Caco-2 (cell line): ENCODE measurements at regions of chr1 and their contacts with region 1.

Region 1: DNA sequence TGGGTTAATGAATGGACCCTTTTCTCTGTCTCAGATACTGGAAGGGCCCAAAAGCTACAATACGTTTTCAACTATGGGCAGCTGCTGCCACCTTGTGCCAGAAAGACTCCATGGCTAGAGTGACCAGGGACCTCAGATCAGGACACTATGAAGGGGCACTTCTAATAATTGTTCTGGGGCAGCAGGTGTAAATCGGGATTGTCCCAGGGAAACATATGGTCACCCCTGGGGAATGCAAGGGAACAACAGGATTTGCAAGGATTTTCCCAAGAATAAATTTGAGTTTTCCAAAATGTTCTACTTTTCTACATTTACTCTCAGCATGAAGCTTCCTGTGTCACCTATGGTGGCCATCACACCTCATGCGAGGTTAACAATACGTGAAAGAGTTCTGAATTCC is 12.0 kb upstream of the FCAMR start:
- DNase-seq: peak; percentile 69 to 71
- H3K4me3 ChIP-seq: no peak overlapping the region
- H3K4me3 Mint-ChIP-seq: no peak overlapping the region
- H3K27ac Mint-ChIP-seq: no peak overlapping the region
- H3K4me1 ChIP-seq: peaks cover 18% of the 10 kb centered on the region
- H3K4me1 Mint-ChIP-seq: peaks cover 22% of the 10 kb centered on the region
- H3K27me3 ChIP-seq: no peaks in the 10 kb centered on the region
- H3K27me3 Mint-ChIP-seq: no peaks in the 10 kb centered on the region
- CTCF ChIP-seq: peak; percentile 76 to 89

Region 2: DNA sequence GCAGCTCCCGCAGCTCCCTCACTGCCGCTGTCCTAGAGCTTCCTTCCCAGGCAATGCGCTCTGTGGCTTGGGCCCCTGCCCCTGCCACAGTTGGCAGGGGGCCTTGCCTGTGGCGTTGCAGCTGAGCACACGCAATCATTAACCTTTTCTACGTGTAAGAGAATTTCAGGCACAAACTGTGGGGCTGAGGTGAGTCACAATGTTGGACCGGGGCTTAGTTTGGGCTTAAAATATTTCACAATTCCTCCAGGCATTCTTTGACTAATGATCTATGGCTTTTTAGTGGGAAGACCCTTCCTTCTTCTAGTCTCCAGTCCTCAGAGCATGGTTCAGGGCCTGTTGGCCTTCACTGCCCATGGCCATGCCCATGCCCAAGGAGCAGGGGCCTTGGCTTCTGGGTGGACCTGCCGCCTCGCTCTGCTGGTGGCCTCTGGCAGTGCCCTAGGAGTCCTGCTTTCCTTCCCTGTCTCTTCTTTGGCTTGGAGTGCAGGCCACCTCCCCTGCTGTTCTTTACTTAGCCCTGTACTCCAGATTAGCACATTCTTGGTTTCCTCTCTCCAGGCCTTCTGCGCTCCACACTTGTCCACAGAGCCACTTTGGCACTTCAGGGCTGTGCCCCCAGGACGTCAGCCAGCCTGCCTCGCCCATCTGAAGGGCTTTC is 258.3 kb before region 1 on chr1:
- CTCF ChIA-PET with region 1: no interaction called
- POLR2A ChIA-PET with region 1: no interaction called
- intact Hi-C with region 1: loop called (anchors 2 kb)
- DNase-seq: peak in 1 of 2 experiments; percentile 66
- H3K4me3 ChIP-seq: no peak overlapping the region
- H3K4me3 Mint-ChIP-seq: peak overlapping the region; percentile 6
- H3K27ac Mint-ChIP-seq: peak overlapping the region; percentile 59
- H3K4me1 ChIP-seq: peaks cover 21% of the 10 kb centered on the region
- H3K4me1 Mint-ChIP-seq: peaks cover 31% of the 10 kb centered on the region
- H3K27me3 ChIP-seq: no peaks in the 10 kb centered on the region
- H3K27me3 Mint-ChIP-seq: no peaks in the 10 kb centered on the region
- CTCF ChIP-seq: no peak

Region 3: GRCh38 chr1:206856674-206857464 is 125.3 kb before region 1 on chr1:
- CTCF ChIA-PET with region 1: no interaction called
- POLR2A ChIA-PET with region 1: no interaction called
- intact Hi-C with region 1: loop called (anchors 2 kb)
- DNase-seq: no peak
- H3K4me3 ChIP-seq: no peak overlapping the region
- H3K4me3 Mint-ChIP-seq: no peak overlapping the region
- H3K27ac Mint-ChIP-seq: no peak overlapping the region
- H3K4me1 ChIP-seq: no peaks in the 10 kb centered on the region
- H3K4me1 Mint-ChIP-seq: peaks cover 6% of the 10 kb centered on the region
- H3K27me3 ChIP-seq: no peaks in the 10 kb centered on the region
- H3K27me3 Mint-ChIP-seq: peaks cover 8% of the 10 kb centered on the region
- CTCF ChIP-seq: peak; percentile 37 to 38

Region 4: DNA sequence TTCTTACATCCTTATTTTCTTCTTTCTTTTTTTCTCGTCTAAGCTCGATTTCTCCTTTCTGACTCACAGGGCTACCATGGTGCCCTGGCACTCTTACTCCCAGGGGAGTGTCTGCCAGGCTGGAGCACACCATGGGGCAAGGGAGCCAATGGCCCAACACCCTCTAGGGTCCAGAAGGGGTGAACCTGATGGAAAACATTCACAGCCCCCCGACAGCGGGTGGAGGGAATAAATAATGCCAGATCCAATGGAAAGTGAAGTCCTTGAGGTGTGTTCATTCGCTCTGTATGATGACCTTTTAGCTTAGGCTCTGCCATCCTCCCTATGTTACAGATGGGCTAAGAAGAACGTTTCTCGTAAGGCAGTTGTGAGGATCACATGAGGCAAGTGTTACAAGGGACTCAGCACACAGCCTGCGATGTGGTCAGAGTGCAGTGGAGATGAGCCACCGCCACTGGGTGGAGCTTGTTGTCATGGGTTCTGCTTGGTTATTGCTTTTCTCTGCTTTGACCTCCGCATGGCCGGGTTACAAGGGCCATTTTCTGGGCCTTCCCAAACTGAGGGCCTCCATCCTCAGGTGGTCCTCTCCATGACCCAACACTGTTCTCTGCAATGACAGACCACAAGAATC is 57.0 kb before region 1 on chr1:
- CTCF ChIA-PET with region 1: interaction called, 4 read pairs
- POLR2A ChIA-PET with region 1: no interaction called
- intact Hi-C with region 1: loop called (anchors 2 kb)
- DNase-seq: peak; percentile 33 to 51
- H3K4me3 ChIP-seq: no peak overlapping the region
- H3K4me3 Mint-ChIP-seq: no peak overlapping the region
- H3K27ac Mint-ChIP-seq: no peak overlapping the region
- H3K4me1 ChIP-seq: peaks cover 11% of the 10 kb centered on the region
- H3K4me1 Mint-ChIP-seq: no peaks in the 10 kb centered on the region
- H3K27me3 ChIP-seq: no peaks in the 10 kb centered on the region
- H3K27me3 Mint-ChIP-seq: no peaks in the 10 kb centered on the region
- CTCF ChIP-seq: no peak

Region 5: DNA sequence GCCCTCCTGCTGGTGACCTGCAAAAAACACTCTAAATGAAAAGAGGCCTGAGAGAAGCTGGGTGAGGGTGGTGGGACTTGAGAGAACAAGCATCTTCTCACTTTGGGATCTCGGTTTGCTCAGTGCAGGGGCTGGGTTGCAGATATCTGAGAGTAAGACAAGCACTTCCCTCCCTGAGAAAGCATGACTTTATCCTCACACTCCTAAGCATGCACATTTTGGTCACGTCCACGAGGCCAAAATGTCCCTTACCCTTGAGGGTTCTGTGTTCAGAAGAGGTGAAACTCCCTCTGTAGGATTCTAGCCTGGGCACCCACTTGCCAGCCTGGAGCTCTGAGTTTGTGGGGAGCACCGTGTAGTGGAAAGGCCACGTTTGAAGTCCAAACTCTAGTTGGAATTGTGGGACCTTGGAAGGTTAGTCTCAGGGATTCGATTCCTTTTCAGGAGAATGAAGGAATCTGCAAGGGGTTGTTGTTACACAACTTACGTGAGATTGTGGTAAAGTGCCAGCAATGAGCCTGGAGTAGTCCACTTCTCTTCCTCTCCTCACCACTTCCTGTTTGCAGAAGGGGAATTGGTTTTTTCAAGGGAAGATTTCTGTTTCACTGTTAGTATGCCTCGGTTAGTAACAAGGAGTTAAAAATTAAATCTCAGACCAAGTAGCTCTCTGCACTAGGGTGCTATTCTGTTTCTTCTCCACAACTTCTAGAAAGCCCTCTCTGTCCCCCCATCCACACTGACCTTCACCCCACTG is 14.9 kb before region 1 on chr1:
- CTCF ChIA-PET with region 1: no interaction called
- POLR2A ChIA-PET with region 1: no interaction called
- intact Hi-C with region 1: no loop called
- DNase-seq: no peak
- H3K4me3 ChIP-seq: no peak overlapping the region
- H3K4me3 Mint-ChIP-seq: no peak overlapping the region
- H3K27ac Mint-ChIP-seq: no peak overlapping the region
- H3K4me1 ChIP-seq: peaks cover 31% of the 10 kb centered on the region
- H3K4me1 Mint-ChIP-seq: peaks cover 8% of the 10 kb centered on the region
- H3K27me3 ChIP-seq: no peaks in the 10 kb centered on the region
- H3K27me3 Mint-ChIP-seq: no peaks in the 10 kb centered on the region
- CTCF ChIP-seq: no peak

Region 6: GRCh38 chr1:207007352-207008033 is 25.3 kb after region 1 on chr1:
- CTCF ChIA-PET with region 1: interaction called, 4 read pairs
- POLR2A ChIA-PET with region 1: no interaction called
- intact Hi-C with region 1: loop called (anchors 1 kb)
- DNase-seq: peak; percentile 76 to 81
- H3K4me3 ChIP-seq: no peak overlapping the region
- H3K4me3 Mint-ChIP-seq: peak overlapping the region; percentile 31
- H3K27ac Mint-ChIP-seq: peak overlapping the region; percentile 97
- H3K4me1 ChIP-seq: peaks cover 72% of the 10 kb centered on the region
- H3K4me1 Mint-ChIP-seq: peaks cover 49% of the 10 kb centered on the region
- H3K27me3 ChIP-seq: no peaks in the 10 kb centered on the region
- H3K27me3 Mint-ChIP-seq: no peaks in the 10 kb centered on the region
- CTCF ChIP-seq: no peak